ENCODE measurements at regions of chr6 and their contacts with region 1.

Region 1: GRCh38 chr6:24313251-24314141 is 44.4 kb downstream of the DCDC2 start:
- DNase-seq: peak; percentile 83 to 90
- H3K4me3 ChIP-seq: no peak overlapping the region
- H3K4me3 Mint-ChIP-seq: peak overlapping the region; percentile 47
- H3K27ac Mint-ChIP-seq: peak overlapping the region; percentile 83
- H3K4me1 ChIP-seq: peaks cover 32% of the 10 kb centered on the region
- H3K4me1 Mint-ChIP-seq: peaks cover 42% of the 10 kb centered on the region
- H3K27me3 ChIP-seq: no peaks in the 10 kb centered on the region
- H3K27me3 Mint-ChIP-seq: no peaks in the 10 kb centered on the region
- CTCF ChIP-seq: no peak

Region 2: GRCh38 chr6:24323632-24324337 is 10.3 kb after region 1 on chr6:
- CTCF ChIA-PET with region 1: interaction called, 7 read pairs
- POLR2A ChIA-PET with region 1: interaction called, 3 read pairs
- intact Hi-C with region 1: loop called (anchors 1 kb)
- DNase-seq: no peak
- H3K4me3 ChIP-seq: no peak overlapping the region
- H3K4me3 Mint-ChIP-seq: peak overlapping the region; percentile 28
- H3K27ac Mint-ChIP-seq: peak overlapping the region; percentile 45
- H3K4me1 ChIP-seq: peaks cover 83% of the 10 kb centered on the region
- H3K4me1 Mint-ChIP-seq: peaks cover 57% of the 10 kb centered on the region
- H3K27me3 ChIP-seq: no peaks in the 10 kb centered on the region
- H3K27me3 Mint-ChIP-seq: no peaks in the 10 kb centered on the region
- CTCF ChIP-seq: no peak

Region 3: GRCh38 chr6:24330137-24330732 is 16.7 kb after region 1 on chr6:
- CTCF ChIA-PET with region 1: interaction called, 3 read pairs
- POLR2A ChIA-PET with region 1: interaction called, 4 read pairs
- intact Hi-C with region 1: loop called (anchors 1 kb)
- DNase-seq: peak; percentile 51 to 76
- H3K4me3 ChIP-seq: no peak overlapping the region
- H3K4me3 Mint-ChIP-seq: peak overlapping the region; percentile 32
- H3K27ac Mint-ChIP-seq: peak overlapping the region; percentile 93
- H3K4me1 ChIP-seq: peaks cover 82% of the 10 kb centered on the region
- H3K4me1 Mint-ChIP-seq: peaks cover 59% of the 10 kb centered on the region
- H3K27me3 ChIP-seq: no peaks in the 10 kb centered on the region
- H3K27me3 Mint-ChIP-seq: no peaks in the 10 kb centered on the region
- CTCF ChIP-seq: no peak

Region 4: GRCh38 chr6:24340998-24341938 is 27.8 kb after region 1 on chr6:
- CTCF ChIA-PET with region 1: no interaction called
- POLR2A ChIA-PET with region 1: no interaction called
- intact Hi-C with region 1: loop called (anchors 1 kb)
- DNase-seq: peak; percentile 52 to 72
- H3K4me3 ChIP-seq: no peak overlapping the region
- H3K4me3 Mint-ChIP-seq: peak overlapping the region; percentile 55
- H3K27ac Mint-ChIP-seq: peak overlapping the region; percentile 92
- H3K4me1 ChIP-seq: peaks cover 46% of the 10 kb centered on the region
- H3K4me1 Mint-ChIP-seq: peaks cover 66% of the 10 kb centered on the region
- H3K27me3 ChIP-seq: no peaks in the 10 kb centered on the region
- H3K27me3 Mint-ChIP-seq: no peaks in the 10 kb centered on the region
- CTCF ChIP-seq: no peak

Measured in Caco-2 (cell line).